Heart right ventricle (tissue), 16 donors: ENCODE measurements at regions of chr1 and their contacts with region 1.

Region 1: GRCh38 chr1:26882696-26883463 is 7.2 kb downstream of the GPN2 start:
- DNase-seq: no peak
- ATAC-seq: no peak
- H3K4me3 ChIP-seq: no peak overlapping the region
- H3K27ac ChIP-seq: no peak overlapping the region
- H3K4me1 ChIP-seq: peaks cover 0 to 13% (median 7%) of the 10 kb centered on the region in 9 donors
- H3K27me3 ChIP-seq: no peaks in the 10 kb centered on the region
- CTCF ChIP-seq: no peak

Region 2: DNA sequence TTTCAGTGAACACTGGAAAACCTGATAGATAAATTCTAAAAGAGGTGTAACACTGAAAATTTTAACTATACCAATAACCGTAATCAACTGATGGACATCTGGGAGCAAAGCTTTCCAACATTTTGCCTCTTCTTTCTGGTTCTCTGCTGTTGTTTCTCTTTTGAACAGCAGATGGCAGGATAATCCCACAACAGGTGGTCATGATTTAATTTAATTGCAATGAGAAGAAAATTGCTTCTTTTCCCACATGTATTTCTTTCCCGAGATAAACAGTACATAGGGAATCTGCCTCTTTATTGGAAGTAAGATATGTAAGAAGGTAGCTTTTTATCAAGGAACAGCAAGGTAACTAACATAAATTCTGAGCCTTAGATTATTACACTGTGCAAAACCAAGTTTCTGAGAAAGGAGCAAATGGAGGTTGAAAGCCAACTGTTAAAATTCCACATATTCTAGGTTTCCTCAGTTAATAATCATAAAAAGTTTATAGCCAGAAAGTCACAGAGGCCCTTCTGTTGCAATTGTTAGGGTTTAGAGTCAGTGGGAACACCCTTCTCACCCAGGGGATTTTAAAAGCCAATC is 280.4 kb before region 1 on chr1:
- intact Hi-C with region 1: loop called in 9 of 10 experiments (anchors 1 to 5 kb)
- DNase-seq: peak in 1 of 2 donors; percentile 70
- ATAC-seq: peak in 3 of 8 donors; percentile 46 to 54 (median 52)
- H3K4me3 ChIP-seq: no peak overlapping the region
- H3K27ac ChIP-seq: no peak overlapping the region
- H3K4me1 ChIP-seq: peaks cover 0 to 8% (median 5%) of the 10 kb centered on the region in 9 donors
- H3K27me3 ChIP-seq: no peaks in the 10 kb centered on the region
- CTCF ChIP-seq: peak; percentile 77 to 95 (median 87)

Region 3: GRCh38 chr1:26811057-26811456 is 71.8 kb before region 1 on chr1:
- intact Hi-C with region 1: loop called in 8 of 10 experiments (anchors 2 to 10 kb)
- DNase-seq: no peak
- ATAC-seq: no peak
- H3K4me3 ChIP-seq: no peak overlapping the region
- H3K27ac ChIP-seq: no peak overlapping the region
- H3K4me1 ChIP-seq: peaks cover 0 to 13% (median 0%) of the 10 kb centered on the region in 9 donors
- H3K27me3 ChIP-seq: no peaks in the 10 kb centered on the region
- CTCF ChIP-seq: no peak

Region 4: DNA sequence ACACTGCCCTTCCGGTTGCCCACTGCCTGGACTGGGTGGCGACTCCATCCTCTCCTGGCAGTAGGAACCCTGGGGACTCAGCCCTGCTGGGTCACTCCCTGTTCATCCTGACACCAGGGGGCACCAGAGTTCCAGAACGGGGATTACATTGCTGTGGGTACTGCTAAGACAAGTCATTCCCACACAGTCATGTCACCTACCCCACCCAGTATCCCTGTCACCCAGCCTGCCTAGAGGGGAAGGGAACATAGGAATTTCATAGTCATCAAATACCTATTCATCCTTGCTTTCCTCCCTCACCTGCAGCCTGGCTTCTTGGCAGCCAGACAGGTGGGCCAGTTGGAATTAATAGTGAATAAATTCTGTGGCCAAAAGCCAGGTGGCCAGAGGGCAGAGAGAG is 29.7 kb before region 1 on chr1:
- intact Hi-C with region 1: loop called in 4 of 10 experiments (anchors 1 to 5 kb)
- DNase-seq: peak; percentile 80 to 84
- ATAC-seq: peak; percentile 82 to 91 (median 86)
- H3K4me3 ChIP-seq: no peak overlapping the region
- H3K27ac ChIP-seq: no peak overlapping the region
- H3K4me1 ChIP-seq: peaks cover 0 to 5% (median 0%) of the 10 kb centered on the region in 9 donors
- H3K27me3 ChIP-seq: no peaks in the 10 kb centered on the region
- CTCF ChIP-seq: peak; percentile 54 to 88 (median 84)

Region 5: GRCh38 chr1:26961826-26962225 is 78.9 kb after region 1 on chr1:
- intact Hi-C with region 1: no loop called
- DNase-seq: no peak
- ATAC-seq: no peak
- H3K4me3 ChIP-seq: no peak overlapping the region
- H3K27ac ChIP-seq: no peak overlapping the region
- H3K4me1 ChIP-seq: peaks cover 0 to 12% (median 10%) of the 10 kb centered on the region in 9 donors
- H3K27me3 ChIP-seq: peaks cover 14 to 79% (median 47%) of the 10 kb centered on the region in 7 donors
- CTCF ChIP-seq: no peak